H1 (cell line): ENCODE measurements at regions of chr12 and their contacts with region 1.

Region 1: GRCh38 chr12:26017484-26018206 is 59.2 kb downstream of the RASSF8 start:
- DNase-seq: peak in 1 of 2 experiments; percentile 77
- H3K4me3 ChIP-seq: no peak overlapping the region
- H3K27ac ChIP-seq: no peak overlapping the region
- H3K4me1 ChIP-seq: peaks cover 4 to 14% (median 8%) of the 10 kb centered on the region in 4 experiments; a peak in 6 of 7 replicates
- H3K27me3 ChIP-seq: no peaks in the 10 kb centered on the region
- CTCF ChIP-seq: peak; percentile 18 to 68 (median 68)
- EP300 ChIP-seq: no peak
- POLR2A ChIP-seq: no peak
- RAD21 ChIP-seq: peak; percentile 82 to 87

Region 2: GRCh38 chr12:25436203-25437030 is 581.2 kb before region 1 on chr12:
- CTCF ChIA-PET with region 1: interaction called, 12 read pairs
- POLR2A ChIA-PET with region 1: no interaction called
- DNase-seq: peak in 1 of 2 experiments; percentile 54
- H3K4me3 ChIP-seq: no peak overlapping the region
- H3K27ac ChIP-seq: no peak overlapping the region; the same call in 1 of the 2 replicates
- H3K4me1 ChIP-seq: peaks cover 0 to 3% (median 0%) of the 10 kb centered on the region in 4 experiments; a peak in 2 of 7 replicates
- H3K27me3 ChIP-seq: no peaks in the 10 kb centered on the region
- CTCF ChIP-seq: peak in 2 of 3 experiments; percentile 69 to 77; a peak in 3 of 4 replicates
- EP300 ChIP-seq: no peak
- POLR2A ChIP-seq: no peak
- RAD21 ChIP-seq: peak; percentile 86 to 88

Region 3: GRCh38 chr12:25958428-25959070 is 59.1 kb before region 1 on chr12 and contains the start of gene RASSF8:
- CTCF ChIA-PET with region 1: interaction called, 10 read pairs
- POLR2A ChIA-PET with region 1: interaction called, 6 read pairs
- DNase-seq: peak in 1 of 2 experiments; percentile 79
- H3K4me3 ChIP-seq: peak within 1 kb of the TSS; percentile 84 to 98 (median 92)
- H3K27ac ChIP-seq: no peak within 1 kb of the TSS; the same call in 1 of the 2 replicates
- H3K4me1 ChIP-seq: peaks cover 0 to 4% (median 2%) of the 10 kb centered on the region in 4 experiments; a peak in 4 of 7 replicates
- H3K27me3 ChIP-seq: no peaks in the 10 kb centered on the region
- CTCF ChIP-seq: no peak
- EP300 ChIP-seq: no peak
- POLR2A ChIP-seq: peak; percentile 18 to 54; a peak in 2 of 3 replicates
- RAD21 ChIP-seq: no peak
- total RNA-seq, gene RASSF8: 46.7 and 48.2 TPM in 2 replicates

Region 4: GRCh38 chr12:26044012-26044383 is 26.4 kb after region 1 on chr12:
- CTCF ChIA-PET with region 1: no interaction called
- POLR2A ChIA-PET with region 1: no interaction called
- DNase-seq: no peak
- H3K4me3 ChIP-seq: no peak overlapping the region
- H3K27ac ChIP-seq: no peak overlapping the region
- H3K4me1 ChIP-seq: peaks cover 0 to 18% (median 6%) of the 10 kb centered on the region in 4 experiments; a peak in 3 of 7 replicates
- H3K27me3 ChIP-seq: peaks cover 0 to 1% (median 0%) of the 10 kb centered on the region in 4 experiments; a peak in 1 of 7 replicates
- CTCF ChIP-seq: no peak
- EP300 ChIP-seq: no peak
- POLR2A ChIP-seq: no peak
- RAD21 ChIP-seq: no peak